Esophagus squamous epithelium (tissue), 5 donors: ENCODE measurements at regions of chr16 and their contacts with region 1.

Region 1: GRCh38 chr16:68396481-68396880 is 51.8 kb downstream of the SMPD3 start:
- DNase-seq: no peak
- H3K4me3 ChIP-seq: no peak overlapping the region
- H3K27ac ChIP-seq: no peak overlapping the region
- H3K4me1 ChIP-seq: no peaks in the 10 kb centered on the region
- H3K27me3 ChIP-seq: peaks cover 0 to 39% (median 0%) of the 10 kb centered on the region in 4 donors
- CTCF ChIP-seq: peak; percentile 59 to 78 (median 70)
- POLR2A ChIP-seq: no peak

Region 2: DNA sequence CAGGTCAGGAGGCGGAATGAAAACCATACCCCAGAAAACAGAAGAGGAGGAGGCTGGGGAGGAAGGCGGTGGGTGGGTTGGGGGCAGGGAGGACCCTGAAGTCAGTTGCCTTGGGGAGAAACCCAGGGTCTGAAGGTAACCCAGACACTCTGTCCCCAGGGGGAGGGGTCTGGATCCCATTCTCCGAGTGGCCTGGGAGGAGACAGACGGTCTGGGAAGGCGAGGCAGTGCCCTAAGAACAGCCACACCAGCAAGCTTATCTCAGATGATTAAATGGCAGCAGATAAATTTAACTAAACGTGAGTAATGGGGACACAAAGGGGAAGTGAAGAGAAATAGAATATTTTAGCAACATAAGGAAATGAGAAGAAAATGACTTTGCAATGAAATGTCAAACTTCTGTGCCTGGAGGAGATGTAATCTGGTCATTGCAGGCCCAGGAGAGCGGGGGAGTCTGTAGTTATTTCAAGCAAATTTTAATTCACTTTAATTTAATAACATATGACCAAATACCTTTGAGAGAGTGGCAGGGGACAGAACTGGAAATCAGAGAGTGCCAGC is 121.2 kb after region 1 on chr16:
- intact Hi-C with region 1: loop called (anchors 10 kb)
- DNase-seq: no peak
- H3K4me3 ChIP-seq: no peak overlapping the region
- H3K27ac ChIP-seq: no peak overlapping the region
- H3K4me1 ChIP-seq: peaks cover 3 to 9% (median 6%) of the 10 kb centered on the region in 3 donors
- H3K27me3 ChIP-seq: no peaks in the 10 kb centered on the region
- CTCF ChIP-seq: no peak
- POLR2A ChIP-seq: no peak